ENCODE measurements at regions of chr14 and their contacts with region 1.

Region 1: DNA sequence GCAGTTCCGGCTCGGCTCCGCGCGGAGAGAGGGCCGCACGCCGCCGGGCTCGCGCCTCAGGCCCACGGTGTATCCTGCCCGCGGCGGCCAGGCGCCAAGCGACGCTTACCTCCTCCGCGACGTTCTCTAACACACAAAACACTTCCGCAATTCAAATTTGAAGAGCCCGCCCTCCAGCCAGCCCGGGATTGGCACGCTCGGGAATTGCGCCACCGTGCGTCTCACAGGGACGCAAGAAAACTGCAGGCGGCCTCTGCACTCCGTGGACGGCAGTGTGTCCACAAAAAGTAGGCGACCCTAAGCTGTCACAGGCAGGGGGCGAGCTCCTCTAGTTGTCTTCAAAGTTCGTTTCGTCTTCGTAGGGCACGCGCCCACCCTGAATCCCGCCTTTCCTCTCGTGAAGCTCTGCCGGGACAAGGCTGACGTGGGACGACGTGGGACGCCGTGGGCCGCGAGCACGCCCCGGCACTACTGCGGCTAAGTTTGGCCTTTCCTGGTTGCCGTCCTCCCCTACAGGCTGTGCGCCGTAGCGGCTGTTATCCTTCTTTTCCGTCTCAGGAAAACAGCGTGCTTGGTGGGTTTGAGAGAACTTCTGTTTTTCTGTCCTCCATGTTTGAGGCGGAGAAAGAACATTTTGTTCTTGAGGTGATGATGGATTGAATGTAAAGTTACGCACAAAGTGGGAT is at the start of gene MIS18BP1:
- DNase-seq: peak; percentile 97
- H3K4me3 ChIP-seq: peak within 1 kb of the TSS; percentile 77
- H3K4me3 Mint-ChIP-seq: peak within 1 kb of the TSS; percentile 86
- H3K27ac Mint-ChIP-seq: peak within 1 kb of the TSS; percentile 96
- H3K4me1 ChIP-seq: no peaks in the 10 kb centered on the region
- H3K4me1 Mint-ChIP-seq: no peaks in the 10 kb centered on the region
- H3K27me3 ChIP-seq: no peaks in the 10 kb centered on the region
- H3K27me3 Mint-ChIP-seq: no peaks in the 10 kb centered on the region
- CTCF ChIP-seq: peak; percentile 49 to 82
- total RNA-seq, gene MIS18BP1: 31.4 and 38.4 TPM in 2 replicates

Region 2: DNA sequence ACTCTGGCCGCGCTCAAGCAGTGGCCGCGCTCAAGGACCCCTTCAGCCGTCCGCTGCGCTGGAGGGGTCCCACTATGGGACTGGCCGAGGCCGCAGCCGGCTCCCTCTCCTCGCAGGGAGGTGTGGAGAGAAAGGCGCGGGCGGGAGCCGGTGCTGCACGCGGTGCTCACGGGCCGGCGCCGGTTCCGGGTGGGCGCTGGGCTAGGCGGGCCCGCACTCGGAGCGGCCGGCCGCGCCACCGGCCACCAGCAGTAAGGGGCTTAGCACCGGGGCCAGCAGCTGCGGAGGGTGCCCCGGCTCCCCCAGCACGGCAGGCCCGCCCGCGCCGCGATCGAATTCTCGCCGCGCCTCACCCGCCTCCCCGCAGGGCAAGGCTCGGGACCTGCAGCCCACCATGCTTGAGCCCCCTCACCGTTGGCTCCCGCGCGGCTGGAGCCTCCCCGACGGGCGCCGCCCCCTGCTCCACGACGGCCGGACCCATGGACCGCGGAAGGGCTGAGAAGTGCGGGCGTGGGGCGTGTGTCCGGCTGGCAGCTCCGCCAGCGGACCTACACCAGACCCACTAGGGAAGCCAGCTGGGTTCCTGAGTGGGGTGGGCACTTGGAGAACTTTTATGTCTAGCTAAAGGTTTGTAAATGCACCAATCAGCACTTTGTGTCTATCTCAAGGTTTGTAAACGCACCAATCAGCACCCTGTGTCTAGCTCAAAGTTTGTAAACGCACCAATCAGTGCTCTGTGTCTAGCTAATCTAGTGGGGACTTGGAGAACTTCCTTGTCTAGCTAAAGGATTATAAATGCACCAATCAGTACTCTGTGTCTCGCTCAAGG is 341.0 kb before region 1 on chr14:
- CTCF ChIA-PET with region 1: no interaction called
- POLR2A ChIA-PET with region 1: no interaction called
- intact Hi-C with region 1: loop called (anchors 5 kb)
- DNase-seq: no peak
- H3K4me3 ChIP-seq: no peak overlapping the region
- H3K4me3 Mint-ChIP-seq: no peak overlapping the region
- H3K27ac Mint-ChIP-seq: no peak overlapping the region
- H3K4me1 ChIP-seq: no peaks in the 10 kb centered on the region
- H3K4me1 Mint-ChIP-seq: no peaks in the 10 kb centered on the region
- H3K27me3 ChIP-seq: no peaks in the 10 kb centered on the region
- H3K27me3 Mint-ChIP-seq: no peaks in the 10 kb centered on the region
- CTCF ChIP-seq: no peak

Region 3: GRCh38 chr14:45156060-45156459 is 97.2 kb before region 1 on chr14:
- CTCF ChIA-PET with region 1: interaction called, 3 read pairs
- POLR2A ChIA-PET with region 1: no interaction called
- intact Hi-C with region 1: loop called (anchors 2 kb)
- DNase-seq: no peak
- H3K4me3 ChIP-seq: no peak overlapping the region
- H3K4me3 Mint-ChIP-seq: no peak overlapping the region
- H3K27ac Mint-ChIP-seq: no peak overlapping the region
- H3K4me1 ChIP-seq: no peaks in the 10 kb centered on the region
- H3K4me1 Mint-ChIP-seq: no peaks in the 10 kb centered on the region
- H3K27me3 ChIP-seq: no peaks in the 10 kb centered on the region
- H3K27me3 Mint-ChIP-seq: no peaks in the 10 kb centered on the region
- CTCF ChIP-seq: no peak

Region 4: GRCh38 chr14:45242706-45243105 is 10.5 kb before region 1 on chr14:
- CTCF ChIA-PET with region 1: no interaction called
- POLR2A ChIA-PET with region 1: no interaction called
- intact Hi-C with region 1: loop called (anchors 2 kb)
- DNase-seq: no peak
- H3K4me3 ChIP-seq: no peak overlapping the region
- H3K4me3 Mint-ChIP-seq: no peak overlapping the region
- H3K27ac Mint-ChIP-seq: no peak overlapping the region
- H3K4me1 ChIP-seq: peaks cover 3% of the 10 kb centered on the region; the same call in 1 of the 2 replicates
- H3K4me1 Mint-ChIP-seq: peaks cover 7% of the 10 kb centered on the region
- H3K27me3 ChIP-seq: no peaks in the 10 kb centered on the region
- H3K27me3 Mint-ChIP-seq: no peaks in the 10 kb centered on the region
- CTCF ChIP-seq: no peak